Activated T-helper 2 cell treated with anti-CD3 and anti-CD28 coated beads, Interferon-gamma antibody, Interleukin-2, Interleukin-4, amounts not matched to agents 10 μg/mL and 5 μg/mL and 100 μg/mL, durations not matched to agents 14 hours and 24 hours and 36 hours (primary cell): ENCODE measurements at regions of chrX and their contacts with region 1.

Region 1: DNA sequence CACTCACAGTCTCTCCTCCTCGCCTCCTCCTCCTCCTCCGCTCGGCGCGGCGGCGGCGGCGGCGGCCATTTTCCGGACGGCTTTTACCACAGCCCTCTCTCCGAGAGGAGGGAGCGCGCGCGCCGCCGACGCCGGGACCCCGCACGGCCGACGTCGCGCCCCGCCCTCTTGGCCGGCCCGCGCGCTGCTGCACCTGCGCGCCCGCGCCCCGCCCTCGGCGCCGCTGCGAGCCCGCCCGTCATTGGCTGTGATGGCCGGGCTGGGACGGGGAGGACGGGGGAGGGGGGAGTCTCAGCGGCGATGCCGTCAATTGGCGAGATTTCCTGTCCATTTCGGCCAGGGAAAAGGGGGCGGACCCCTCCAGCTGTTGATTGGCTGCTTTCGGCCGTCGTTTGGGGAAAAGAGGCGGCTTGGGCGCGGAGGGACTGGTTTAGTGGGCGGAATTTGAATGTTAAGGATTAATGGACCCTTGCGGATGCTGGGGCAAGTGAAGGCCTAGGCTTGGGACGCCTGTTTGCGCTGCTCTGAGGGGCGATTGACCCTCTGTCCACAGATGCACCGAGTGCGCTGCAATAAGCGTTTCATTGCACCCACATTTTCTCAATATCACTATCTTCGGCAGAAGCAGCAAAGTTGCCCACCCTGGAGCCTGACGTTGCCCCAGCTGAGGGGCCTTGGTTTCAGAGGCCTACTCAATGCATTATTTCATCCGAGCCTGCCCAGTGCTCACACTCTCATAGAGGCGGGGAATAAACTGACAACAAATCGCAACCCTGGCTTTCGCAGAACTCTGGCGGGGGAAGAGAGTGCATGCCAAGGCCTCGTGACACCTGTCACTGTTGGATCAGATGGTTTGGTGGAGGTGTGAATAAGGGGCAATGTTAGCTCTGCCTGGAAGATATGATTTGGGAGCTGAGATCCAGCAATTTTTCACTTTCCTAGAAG is at the start of gene MECP2:
- DNase-seq: peak; percentile 85
- H3K4me3 Mint-ChIP-seq: peak within 1 kb of the TSS; percentile 99
- H3K27ac Mint-ChIP-seq: peak within 1 kb of the TSS; percentile 100
- H3K4me1 Mint-ChIP-seq: peaks cover 55% of the 10 kb centered on the region
- H3K27me3 Mint-ChIP-seq: peaks cover 4% of the 10 kb centered on the region
- total RNA-seq, gene MECP2: 58.2 and 58.4 TPM in 2 replicates

Region 2: DNA sequence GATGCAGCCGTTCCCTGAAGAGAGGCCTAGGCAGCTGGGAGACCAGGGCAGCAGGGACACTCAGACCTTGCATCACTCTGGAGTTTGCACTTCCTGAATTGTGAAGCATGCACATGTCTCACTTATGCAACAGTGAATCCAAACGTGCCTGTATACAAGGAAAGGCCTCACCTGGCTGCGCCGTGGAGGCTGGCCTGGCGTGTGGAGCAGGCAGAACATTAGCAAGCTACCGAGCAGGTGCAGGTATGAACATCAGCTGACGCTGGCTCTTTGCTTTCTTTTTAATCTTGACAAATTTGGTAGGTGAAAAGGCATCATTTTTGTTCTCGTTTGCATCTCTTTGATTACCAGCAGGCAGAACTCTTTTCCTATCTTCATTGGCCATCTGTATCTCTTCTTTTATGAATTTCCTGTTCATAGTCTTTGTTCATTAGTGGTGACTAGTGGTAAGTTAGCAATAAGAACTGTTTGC is 41.1 kb before region 1 on chrX:
- intact Hi-C with region 1: loop called (anchors 5 kb)
- DNase-seq: no peak
- H3K4me3 Mint-ChIP-seq: no peak overlapping the region
- H3K27ac Mint-ChIP-seq: peak overlapping the region; percentile 65
- H3K4me1 Mint-ChIP-seq: peaks cover 42% of the 10 kb centered on the region
- H3K27me3 Mint-ChIP-seq: no peaks in the 10 kb centered on the region

Region 3: DNA sequence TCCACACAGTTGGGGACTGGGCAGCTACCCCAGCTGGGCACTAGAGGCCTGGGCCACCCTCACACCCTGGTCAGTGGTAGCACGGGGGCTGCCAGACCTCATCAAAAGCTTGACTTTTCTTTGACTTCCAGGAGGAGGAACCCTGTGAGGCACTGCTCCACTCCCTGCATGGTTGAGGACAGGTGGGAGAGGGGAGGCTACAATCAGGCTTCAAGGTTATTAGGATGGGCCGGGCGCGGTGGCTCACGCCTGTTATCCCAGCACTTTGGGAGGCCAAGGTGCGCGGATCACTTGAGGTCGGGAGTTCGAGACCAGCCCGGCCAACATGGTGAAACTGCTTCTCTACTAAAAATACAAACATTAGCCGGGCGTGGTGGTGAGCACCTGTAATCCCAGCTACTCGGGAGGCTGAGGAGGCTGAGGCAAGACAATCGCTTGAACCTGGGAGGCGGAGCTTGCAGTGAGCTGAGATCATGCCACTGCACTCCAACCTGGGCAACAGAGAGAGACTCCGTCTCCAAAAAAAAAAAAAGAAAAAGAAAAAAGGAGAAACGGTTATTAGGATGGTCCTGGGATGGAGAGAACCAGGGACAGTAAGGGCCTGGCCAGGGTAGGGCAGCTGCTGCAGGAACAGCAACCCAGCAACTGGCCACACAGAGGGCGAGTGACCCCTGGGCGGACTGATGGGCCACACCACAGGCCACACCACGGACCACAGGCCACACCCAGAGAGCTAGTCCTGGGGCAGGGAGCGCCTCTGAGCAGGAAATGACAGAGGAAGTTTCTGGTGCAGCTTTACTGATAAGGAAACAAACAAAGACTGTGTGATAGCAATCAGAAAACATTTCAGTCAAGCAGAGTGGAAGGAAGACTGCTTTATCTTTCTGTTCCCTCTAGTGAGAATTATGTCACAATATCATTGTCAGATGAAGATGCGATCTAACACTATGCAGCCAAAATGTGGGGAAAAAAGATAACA is 25.7 kb after region 1 on chrX:
- intact Hi-C with region 1: loop called (anchors 2 kb)
- DNase-seq: peak; percentile 57
- H3K4me3 Mint-ChIP-seq: no peak overlapping the region
- H3K27ac Mint-ChIP-seq: no peak overlapping the region
- H3K4me1 Mint-ChIP-seq: peaks cover 17% of the 10 kb centered on the region
- H3K27me3 Mint-ChIP-seq: peaks cover 2% of the 10 kb centered on the region

Region 4: GRCh38 chrX:154370882-154371770 is 273.3 kb after region 1 on chrX:
- intact Hi-C with region 1: loop called (anchors 5 kb)
- DNase-seq: peak; percentile 88
- H3K4me3 Mint-ChIP-seq: peak overlapping the region; percentile 80
- H3K27ac Mint-ChIP-seq: no peak overlapping the region
- H3K4me1 Mint-ChIP-seq: peaks cover 11% of the 10 kb centered on the region
- H3K27me3 Mint-ChIP-seq: no peaks in the 10 kb centered on the region